T-cell (primary cell): ENCODE measurements at regions of chr16 and their contacts with region 1.

Region 1: GRCh38 chr16:11316331-11317015 is 28.8 kb upstream of the RMI2 start:
- DNase-seq: no peak
- ATAC-seq: no peak
- H3K4me3 ChIP-seq: no peak overlapping the region
- H3K4me3 Mint-ChIP-seq: no peak overlapping the region
- H3K27ac ChIP-seq: no peak overlapping the region
- H3K27ac Mint-ChIP-seq: peak overlapping the region in 1 of 2 donors; percentile 17
- H3K4me1 ChIP-seq: peaks cover 11 to 17% of the 10 kb centered on the region in 2 experiments
- H3K4me1 Mint-ChIP-seq: peaks cover 16 to 24% (median 24%) of the 10 kb centered on the region in 3 donors
- H3K27me3 ChIP-seq: no peaks in the 10 kb centered on the region
- H3K27me3 Mint-ChIP-seq: no peaks in the 10 kb centered on the region

Region 2: DNA sequence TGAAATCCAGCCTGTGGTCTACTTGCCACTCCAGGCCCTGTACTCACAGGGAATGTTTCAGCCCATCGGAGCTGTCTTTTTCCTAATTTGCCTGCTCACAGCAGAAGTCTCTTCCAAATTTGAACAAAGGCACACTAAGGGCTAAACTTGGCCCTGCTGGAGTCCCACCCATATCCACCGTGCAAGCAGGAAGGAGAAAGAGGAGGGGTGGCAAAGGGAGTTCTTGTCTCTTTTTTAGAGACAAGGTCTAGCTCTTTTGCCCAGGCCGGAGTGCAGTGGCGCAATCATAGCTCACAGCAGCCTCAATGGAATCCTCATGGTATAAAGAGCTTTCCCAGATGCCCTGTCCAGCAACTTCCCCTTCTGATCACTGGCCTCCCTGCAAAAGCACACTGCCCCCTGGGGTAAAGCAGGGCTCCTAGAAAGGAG is 32.6 kb before region 1 on chr16:
- CTCF ChIA-PET with region 1: no interaction called
- POLR2A ChIA-PET with region 1: interaction called in 1 of 2 experiments, 13 read pairs
- DNase-seq: no peak
- ATAC-seq: no peak
- H3K4me3 ChIP-seq: no peak overlapping the region
- H3K4me3 Mint-ChIP-seq: no peak overlapping the region
- H3K27ac ChIP-seq: no peak overlapping the region
- H3K27ac Mint-ChIP-seq: no peak overlapping the region
- H3K4me1 ChIP-seq: no peaks in the 10 kb centered on the region
- H3K4me1 Mint-ChIP-seq: peaks cover 0 to 6% (median 2%) of the 10 kb centered on the region in 3 donors
- H3K27me3 ChIP-seq: peaks cover 0 to 14% of the 10 kb centered on the region in 2 experiments
- H3K27me3 Mint-ChIP-seq: peaks cover 0 to 7% of the 10 kb centered on the region in 2 donors

Region 3: DNA sequence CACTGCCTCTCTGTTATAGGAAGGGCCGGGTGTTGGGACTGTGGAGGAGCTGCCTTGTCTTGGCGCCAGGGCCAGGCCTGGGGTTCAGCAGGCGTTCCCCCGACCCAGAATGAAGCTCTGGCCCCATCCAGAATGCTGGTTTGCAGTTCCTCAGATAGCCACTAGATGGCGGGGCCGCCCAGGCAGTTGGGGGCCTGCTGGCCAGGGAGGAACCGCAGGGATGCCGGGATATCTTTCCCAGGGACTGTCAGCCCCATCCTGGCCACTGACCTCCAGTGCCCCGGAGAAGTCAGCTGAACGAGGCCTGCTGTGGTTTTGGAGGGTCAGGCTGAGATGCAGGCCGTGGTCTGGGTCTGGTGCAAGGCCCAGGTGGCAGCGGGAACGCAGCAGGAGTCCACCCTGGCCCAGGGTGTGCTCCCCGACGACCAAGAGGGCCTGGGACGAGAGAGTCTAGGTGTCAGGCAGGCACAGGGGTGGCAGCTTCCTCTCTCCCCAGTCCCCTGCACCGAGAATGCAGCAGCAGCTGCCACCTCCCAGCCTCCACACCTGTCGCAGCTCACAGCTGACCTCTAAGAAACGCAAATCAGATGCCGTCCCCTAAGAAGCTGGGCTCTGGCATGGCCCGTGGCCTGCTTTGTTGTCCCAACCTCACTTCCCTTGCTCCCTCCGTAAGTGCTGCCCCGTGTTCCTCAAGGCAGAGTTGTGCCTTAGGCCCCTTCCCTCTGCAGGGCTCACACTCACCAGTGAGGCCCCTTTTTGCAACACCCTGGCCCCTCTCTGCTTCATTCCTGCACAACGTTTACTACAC is 80.0 kb after region 1 on chr16:
- CTCF ChIA-PET with region 1: no interaction called
- POLR2A ChIA-PET with region 1: no interaction called
- DNase-seq: peak in 32 of 35 experiments; percentile 22 to 76 (median 51)
- ATAC-seq: peak; percentile 58 to 72 (median 68)
- H3K4me3 ChIP-seq: no peak overlapping the region
- H3K4me3 Mint-ChIP-seq: no peak overlapping the region
- H3K27ac ChIP-seq: no peak overlapping the region
- H3K27ac Mint-ChIP-seq: no peak overlapping the region
- H3K4me1 ChIP-seq: peaks cover 0 to 7% of the 10 kb centered on the region in 2 experiments
- H3K4me1 Mint-ChIP-seq: peaks cover 0 to 2% (median 0%) of the 10 kb centered on the region in 3 donors
- H3K27me3 ChIP-seq: peaks cover 0 to 10% of the 10 kb centered on the region in 2 experiments
- H3K27me3 Mint-ChIP-seq: no peaks in the 10 kb centered on the region